CD8-positive, alpha-beta memory T cell (primary cell): ENCODE measurements at regions of chr15 and their contacts with region 1.

Region 1: GRCh38 chr15:63752075-63752684 is 81.6 kb downstream of the HERC1 start:
- DNase-seq: peak in 3 of 5 donors; percentile 42 to 58 (median 52)
- H3K4me3 ChIP-seq: no peak overlapping the region
- H3K4me3 Mint-ChIP-seq: no peak overlapping the region
- H3K27ac ChIP-seq: no peak overlapping the region
- H3K27ac Mint-ChIP-seq: peak overlapping the region in 4 of 8 donors; percentile 0 to 30 (median 22)
- H3K4me1 ChIP-seq: no peaks in the 10 kb centered on the region
- H3K4me1 Mint-ChIP-seq: peaks cover 0 to 5% (median 2%) of the 10 kb centered on the region in 3 donors
- H3K27me3 ChIP-seq: no peaks in the 10 kb centered on the region
- H3K27me3 Mint-ChIP-seq: no peaks in the 10 kb centered on the region

Region 2: DNA sequence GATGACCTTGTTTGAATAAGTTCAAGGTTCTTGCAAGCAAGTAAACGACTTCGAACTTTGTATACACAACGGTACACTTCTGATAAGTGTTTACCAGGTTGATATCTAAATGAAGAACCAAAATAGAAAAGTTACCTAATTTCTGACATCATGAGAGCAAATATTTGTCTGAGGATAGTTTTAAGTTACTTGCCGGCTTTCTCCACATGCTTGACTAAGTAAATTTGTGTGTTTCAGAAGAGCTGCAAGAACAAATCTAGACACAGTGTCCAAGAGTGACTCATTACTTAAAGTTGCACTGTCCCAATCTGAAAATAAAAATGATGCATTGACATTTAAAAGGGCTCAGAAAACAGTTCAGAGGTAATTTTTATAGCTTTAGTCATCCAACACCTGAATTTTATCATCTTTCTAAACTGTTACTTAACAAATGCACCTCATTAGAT is 33.6 kb before region 1 on chr15:
- CTCF ChIA-PET with region 1: no interaction called
- POLR2A ChIA-PET with region 1: no interaction called
- DNase-seq: no peak
- H3K4me3 ChIP-seq: no peak overlapping the region
- H3K4me3 Mint-ChIP-seq: no peak overlapping the region
- H3K27ac ChIP-seq: no peak overlapping the region
- H3K27ac Mint-ChIP-seq: peak overlapping the region in 3 of 8 donors; percentile 10 to 56 (median 18)
- H3K4me1 ChIP-seq: no peaks in the 10 kb centered on the region
- H3K4me1 Mint-ChIP-seq: peaks cover 2 to 11% (median 11%) of the 10 kb centered on the region in 3 donors
- H3K27me3 ChIP-seq: no peaks in the 10 kb centered on the region
- H3K27me3 Mint-ChIP-seq: no peaks in the 10 kb centered on the region

Region 3: DNA sequence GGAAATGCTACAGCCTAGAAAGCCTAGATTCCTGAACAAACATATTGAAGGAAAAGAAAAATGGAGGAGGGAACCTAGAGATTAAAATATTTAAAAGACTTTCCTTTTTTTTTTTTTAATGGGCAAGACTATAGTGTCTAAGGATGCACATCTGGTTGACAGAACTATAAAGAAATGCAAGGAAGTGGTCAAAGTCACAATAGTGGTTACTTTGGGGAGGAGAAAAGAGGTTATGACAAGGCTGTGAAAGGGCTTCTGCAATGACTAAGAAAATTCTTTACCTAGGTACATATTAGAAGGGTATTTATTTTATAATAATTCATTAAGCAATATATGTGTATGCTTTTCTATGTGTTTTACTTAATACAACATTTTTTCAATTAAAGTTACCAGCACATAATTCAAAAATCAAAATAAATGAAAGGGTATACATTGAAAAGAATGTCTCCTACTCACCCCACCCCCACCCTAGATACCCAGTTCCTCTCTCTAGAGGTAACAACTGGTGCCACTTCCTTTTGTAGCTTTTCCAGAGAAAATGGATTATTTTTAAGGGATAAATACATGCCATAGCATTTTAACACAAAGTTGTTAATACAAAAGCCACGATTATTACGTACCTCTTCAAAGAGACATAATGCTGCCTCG is 11.4 kb after region 1 on chr15:
- CTCF ChIA-PET with region 1: interaction called, 13 read pairs
- POLR2A ChIA-PET with region 1: no interaction called
- DNase-seq: peak in 2 of 5 donors; percentile 10 to 44
- H3K4me3 ChIP-seq: no peak overlapping the region
- H3K4me3 Mint-ChIP-seq: peak overlapping the region in 4 of 7 donors; percentile 29 to 49 (median 34)
- H3K27ac ChIP-seq: no peak overlapping the region
- H3K27ac Mint-ChIP-seq: peak overlapping the region in 7 of 8 donors; percentile 31 to 86 (median 77)
- H3K4me1 ChIP-seq: peaks cover 30% of the 10 kb centered on the region
- H3K4me1 Mint-ChIP-seq: peaks cover 52 to 73% (median 71%) of the 10 kb centered on the region in 3 donors
- H3K27me3 ChIP-seq: no peaks in the 10 kb centered on the region
- H3K27me3 Mint-ChIP-seq: no peaks in the 10 kb centered on the region

Region 4: DNA sequence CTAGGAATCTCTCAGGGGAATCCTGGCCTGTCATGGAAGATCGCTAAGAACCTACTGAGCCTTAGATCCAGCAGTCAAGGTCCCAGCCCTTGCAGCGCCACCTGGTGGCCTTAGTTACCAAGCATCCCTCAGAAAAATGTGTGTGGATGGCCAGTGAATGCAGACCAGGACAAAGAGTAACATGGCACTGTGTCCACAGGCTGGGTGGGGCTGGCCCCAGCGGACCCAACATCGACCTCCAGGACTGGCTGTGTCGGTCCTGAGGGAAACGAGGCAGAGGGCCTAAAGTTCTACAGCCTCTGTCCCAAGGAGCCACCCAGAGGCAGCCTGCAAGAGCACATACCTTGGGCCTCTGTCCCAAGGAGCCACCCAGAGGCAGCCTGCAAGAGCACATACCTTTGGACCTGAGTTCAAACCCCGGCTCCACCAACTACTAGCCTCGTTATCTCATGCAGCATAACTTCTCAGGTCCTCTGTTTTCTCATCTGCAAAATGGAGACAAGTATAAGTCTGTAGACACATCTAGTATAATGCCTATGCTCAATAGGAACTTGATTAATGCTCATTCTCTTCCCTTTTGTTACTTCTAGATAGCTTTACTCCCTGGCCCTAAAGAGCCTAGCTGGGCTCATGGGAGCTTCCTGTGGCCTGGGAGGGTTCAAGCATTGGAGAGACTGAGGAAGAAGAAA is 139.0 kb after region 1 on chr15:
- CTCF ChIA-PET with region 1: interaction called, 27 read pairs
- POLR2A ChIA-PET with region 1: no interaction called
- DNase-seq: peak; percentile 51 to 75 (median 60)
- H3K4me3 ChIP-seq: peak overlapping the region; percentile 4
- H3K4me3 Mint-ChIP-seq: peak overlapping the region in 3 of 7 donors; percentile 56 to 71 (median 69)
- H3K27ac ChIP-seq: no peak overlapping the region
- H3K27ac Mint-ChIP-seq: peak overlapping the region; percentile 55 to 94 (median 90)
- H3K4me1 ChIP-seq: peaks cover 70% of the 10 kb centered on the region
- H3K4me1 Mint-ChIP-seq: peaks cover 51 to 60% (median 51%) of the 10 kb centered on the region in 3 donors
- H3K27me3 ChIP-seq: no peaks in the 10 kb centered on the region
- H3K27me3 Mint-ChIP-seq: no peaks in the 10 kb centered on the region

Region 5: GRCh38 chr15:64067564-64068030 is 315.4 kb after region 1 on chr15:
- CTCF ChIA-PET with region 1: interaction called, 68 read pairs
- POLR2A ChIA-PET with region 1: interaction called, 3 read pairs
- DNase-seq: peak; percentile 51 to 71 (median 59)
- H3K4me3 ChIP-seq: no peak overlapping the region
- H3K4me3 Mint-ChIP-seq: peak overlapping the region in 3 of 7 donors; percentile 15 to 46 (median 29)
- H3K27ac ChIP-seq: no peak overlapping the region
- H3K27ac Mint-ChIP-seq: peak overlapping the region in 3 of 8 donors; percentile 66 to 82 (median 76)
- H3K4me1 ChIP-seq: peaks cover 6% of the 10 kb centered on the region
- H3K4me1 Mint-ChIP-seq: peaks cover 8 to 9% (median 8%) of the 10 kb centered on the region in 3 donors
- H3K27me3 ChIP-seq: no peaks in the 10 kb centered on the region
- H3K27me3 Mint-ChIP-seq: no peaks in the 10 kb centered on the region